Calu3 (cell line): ENCODE measurements at regions of chr2 and their contacts with region 1.

Region 1: DNA sequence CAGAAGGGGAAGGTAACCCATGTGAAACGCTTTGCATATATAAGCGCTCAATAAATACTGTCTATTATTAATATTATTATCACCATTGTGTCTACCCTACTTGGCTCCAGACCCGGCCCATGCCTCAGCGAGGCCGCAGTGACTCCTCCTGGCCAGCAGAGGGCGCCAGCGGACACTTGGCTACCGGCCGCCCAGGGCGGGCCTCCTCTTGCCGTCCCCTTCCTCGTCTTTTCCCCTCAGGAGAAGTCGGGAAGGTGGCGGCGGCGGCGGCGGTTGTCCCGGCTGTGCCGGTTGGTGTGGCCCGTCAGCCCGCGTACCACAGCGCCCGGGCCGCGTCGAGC is at the start of gene AGFG1:
- DNase-seq: peak; percentile 92
- H3K4me3 Mint-ChIP-seq: peak within 1 kb of the TSS; percentile 81
- H3K27ac Mint-ChIP-seq: peak within 1 kb of the TSS; percentile 57
- H3K4me1 Mint-ChIP-seq: peaks cover 40% of the 10 kb centered on the region
- H3K27me3 Mint-ChIP-seq: no peaks in the 10 kb centered on the region
- CTCF ChIP-seq: peak; percentile 99
- total RNA-seq, gene AGFG1: 115 and 126 TPM in 2 replicates

Region 2: DNA sequence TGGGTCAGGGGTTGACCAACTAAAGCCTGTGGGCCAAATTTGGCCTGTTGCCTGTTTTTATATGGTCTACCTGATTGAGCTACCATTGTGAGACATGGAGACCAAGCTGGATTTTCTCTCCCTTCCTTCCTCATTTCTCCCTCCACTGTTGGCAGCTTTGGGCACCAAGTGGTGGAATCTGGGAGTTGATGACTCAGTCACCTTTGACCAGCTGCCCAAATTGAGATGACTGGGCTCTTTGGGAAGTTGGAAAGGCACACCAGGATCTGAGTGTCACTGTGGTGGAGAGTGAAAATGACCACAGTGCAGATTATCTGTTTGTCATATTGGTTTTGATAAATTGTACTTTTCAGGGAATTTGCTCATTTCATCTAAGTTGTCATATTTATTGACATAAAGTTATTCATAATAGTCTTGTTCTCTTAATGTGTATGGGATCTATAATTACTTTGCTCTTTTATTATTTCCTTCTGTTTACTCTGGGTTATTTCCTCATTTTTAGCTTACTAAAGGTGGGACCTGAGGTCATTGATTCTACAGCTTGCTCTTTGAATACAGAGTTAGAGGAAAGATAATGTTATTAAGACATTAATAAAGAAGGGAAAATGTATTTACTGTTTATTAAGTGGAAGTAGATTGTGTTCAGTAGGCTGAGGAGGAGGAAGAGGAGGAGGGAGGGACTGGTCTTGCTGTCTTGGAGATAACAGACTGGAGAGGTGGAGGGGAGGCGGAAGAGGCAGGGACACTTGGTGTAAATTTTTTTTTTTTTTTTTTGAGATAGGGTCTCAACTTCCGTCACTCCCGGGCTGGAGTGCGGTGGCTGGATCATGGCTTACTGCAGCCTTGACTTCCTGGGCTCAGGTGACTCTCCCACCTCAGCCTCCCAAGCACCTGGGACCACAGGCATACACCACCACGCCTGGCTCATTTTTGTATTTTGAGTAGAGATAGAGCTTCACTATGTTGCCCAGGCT is 31.8 kb after region 1 on chr2:
- CTCF ChIA-PET with region 1: interaction called, 14 read pairs
- intact Hi-C with region 1: no loop called
- DNase-seq: peak; percentile 69
- H3K4me3 Mint-ChIP-seq: peak overlapping the region; percentile 33
- H3K27ac Mint-ChIP-seq: peak overlapping the region; percentile 80
- H3K4me1 Mint-ChIP-seq: peaks cover 69% of the 10 kb centered on the region
- H3K27me3 Mint-ChIP-seq: no peaks in the 10 kb centered on the region
- CTCF ChIP-seq: no peak

Region 3: GRCh38 chr2:227748079-227748478 is 276.2 kb after region 1 on chr2:
- CTCF ChIA-PET with region 1: no interaction called
- intact Hi-C with region 1: no loop called
- DNase-seq: no peak
- H3K4me3 Mint-ChIP-seq: no peak overlapping the region
- H3K27ac Mint-ChIP-seq: no peak overlapping the region
- H3K4me1 Mint-ChIP-seq: peaks cover 16% of the 10 kb centered on the region
- H3K27me3 Mint-ChIP-seq: no peaks in the 10 kb centered on the region
- CTCF ChIP-seq: no peak